ENCODE measurements at regions of chr7 and their contacts with region 1.

Region 1: GRCh38 chr7:128725531-128725930 is 13.6 kb upstream of the CALU start:
- DNase-seq: no peak
- H3K4me3 ChIP-seq: no peak overlapping the region
- H3K27ac ChIP-seq: no peak overlapping the region
- H3K4me1 ChIP-seq: peaks cover 8% of the 10 kb centered on the region; the same call in 1 of the 2 replicates
- H3K27me3 ChIP-seq: no peaks in the 10 kb centered on the region
- CTCF ChIP-seq: no peak

Region 2: GRCh38 chr7:128710481-128710880 is 15.1 kb before region 1 on chr7:
- CTCF ChIA-PET with region 1: no interaction called
- POLR2A ChIA-PET with region 1: interaction called, 11 read pairs
- intact Hi-C with region 1: no loop called
- DNase-seq: no peak
- H3K4me3 ChIP-seq: no peak overlapping the region
- H3K27ac ChIP-seq: no peak overlapping the region
- H3K4me1 ChIP-seq: 0 out of 2 replicates have a peak, but pooled peaks cover 11% of the 10 kb centered on the region
- H3K27me3 ChIP-seq: no peaks in the 10 kb centered on the region
- CTCF ChIP-seq: no peak

Region 3: GRCh38 chr7:128755819-128756476 is 30.4 kb after region 1 on chr7:
- CTCF ChIA-PET with region 1: no interaction called
- POLR2A ChIA-PET with region 1: no interaction called
- intact Hi-C with region 1: no loop called
- DNase-seq: no peak
- H3K4me3 ChIP-seq: no peak overlapping the region
- H3K27ac ChIP-seq: no peak overlapping the region
- H3K4me1 ChIP-seq: no peaks in the 10 kb centered on the region
- H3K27me3 ChIP-seq: no peaks in the 10 kb centered on the region
- CTCF ChIP-seq: no peak

Region 4: DNA sequence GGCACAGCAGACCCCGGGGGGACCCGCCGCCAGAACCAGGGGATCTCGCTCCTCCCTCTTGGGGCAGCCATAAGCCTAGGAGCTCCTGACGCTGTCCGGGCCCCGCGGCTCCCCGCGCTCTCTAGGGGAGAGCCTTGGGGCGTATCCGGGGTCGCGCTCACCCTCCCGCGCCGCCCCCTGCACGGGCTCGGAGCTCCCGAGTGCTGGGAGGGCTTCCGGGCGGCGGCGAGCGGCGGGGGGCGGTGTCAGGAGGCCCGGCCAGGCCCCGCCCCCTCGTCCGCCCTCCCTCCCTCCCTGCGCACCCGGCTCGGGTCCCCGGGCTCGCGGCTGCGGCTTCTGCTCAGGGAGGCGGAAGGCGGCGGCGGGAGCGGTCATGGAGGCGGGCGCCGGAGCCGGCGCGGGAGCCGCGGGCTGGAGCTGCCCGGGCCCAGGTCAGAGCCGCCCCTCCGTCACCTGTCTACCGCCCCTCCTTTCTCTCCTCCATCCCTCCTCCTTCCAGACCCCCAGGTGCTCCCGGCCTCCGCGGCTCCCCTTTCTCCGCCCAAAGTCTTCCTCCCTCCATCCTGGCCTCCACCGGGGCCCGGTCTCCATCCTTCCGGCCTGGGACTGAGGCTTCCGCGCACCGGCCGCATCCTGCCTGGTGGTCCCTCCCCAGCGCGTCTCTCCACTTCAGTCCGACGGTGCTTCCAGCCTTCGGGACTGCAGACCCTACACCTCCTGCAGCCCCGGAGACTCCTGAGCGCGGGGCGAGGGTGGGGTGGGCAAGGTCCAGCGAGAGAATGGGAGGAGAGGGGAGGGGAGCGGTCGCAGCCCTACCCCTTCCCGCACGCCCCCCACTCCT is 65.8 kb after region 1 on chr7:
- CTCF ChIA-PET with region 1: no interaction called
- POLR2A ChIA-PET with region 1: no interaction called
- intact Hi-C with region 1: no loop called
- DNase-seq: peak in 1 of 2 experiments; percentile 71
- H3K4me3 ChIP-seq: peak overlapping the region; percentile 65
- H3K27ac ChIP-seq: no peak overlapping the region
- H3K4me1 ChIP-seq: peaks cover 4% of the 10 kb centered on the region; the same call in 1 of the 2 replicates
- H3K27me3 ChIP-seq: no peaks in the 10 kb centered on the region
- CTCF ChIP-seq: no peak

Region 5: DNA sequence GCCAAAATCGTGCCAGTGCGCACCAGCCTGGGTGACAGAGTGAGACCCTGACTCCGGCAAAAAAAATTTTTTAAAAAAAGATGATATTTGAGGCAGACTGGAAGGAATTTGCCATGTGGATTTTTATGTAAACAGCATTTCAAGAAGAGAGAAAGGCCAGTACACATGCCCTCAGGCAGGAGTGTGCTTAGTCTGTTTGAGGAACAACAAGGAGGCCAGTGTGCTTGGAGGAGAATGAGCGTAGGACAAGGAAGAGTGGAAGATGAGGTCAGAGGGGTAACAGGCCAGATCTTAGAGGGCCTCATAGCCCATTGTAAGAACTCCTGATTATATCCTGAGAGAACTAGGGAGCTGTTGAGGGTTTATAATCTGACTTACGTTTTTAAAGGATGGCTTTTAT is 691.5 kb after region 1 on chr7:
- CTCF ChIA-PET with region 1: no interaction called
- POLR2A ChIA-PET with region 1: no interaction called
- intact Hi-C with region 1: no loop called
- DNase-seq: no peak
- H3K4me3 ChIP-seq: no peak overlapping the region
- H3K27ac ChIP-seq: no peak overlapping the region
- H3K4me1 ChIP-seq: no peaks in the 10 kb centered on the region
- H3K27me3 ChIP-seq: no peaks in the 10 kb centered on the region
- CTCF ChIP-seq: no peak

Measured in PC-9 (cell line).